ENCODE measurements at regions of chr9 and their contacts with region 1.

Region 1: DNA sequence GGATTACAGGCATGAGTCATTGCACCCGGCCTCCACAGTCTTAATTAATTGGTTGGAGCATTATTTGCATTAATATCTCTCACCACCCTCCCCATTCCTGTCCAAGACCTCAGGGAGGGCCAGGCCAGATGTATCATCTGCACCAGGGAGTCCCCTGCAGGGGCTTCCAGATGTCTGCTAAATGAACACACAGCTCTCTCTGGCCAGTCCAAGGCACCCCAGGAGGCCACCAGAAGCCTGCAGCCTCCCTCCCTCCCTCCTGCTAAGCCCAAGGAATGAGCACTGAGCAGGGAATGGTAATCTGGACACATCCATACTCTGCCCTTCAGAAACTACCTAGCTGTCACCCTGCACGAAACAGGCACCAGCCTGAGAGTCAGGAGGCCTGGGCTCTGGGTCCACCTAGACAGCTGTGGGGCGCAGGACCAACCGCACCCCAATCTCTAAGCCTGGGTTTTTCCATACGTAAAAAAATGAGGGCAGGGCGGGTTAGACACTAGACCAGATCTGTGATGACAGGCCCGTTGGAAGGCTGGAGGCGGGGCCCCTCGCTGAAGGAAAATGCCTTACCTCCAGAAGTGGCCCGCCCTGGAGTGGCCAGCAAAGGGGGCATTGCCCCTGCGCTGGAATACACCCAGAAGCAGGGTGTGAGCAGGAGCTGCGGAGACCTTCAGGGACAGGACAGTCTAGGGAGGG is 8.3 kb downstream of the CIZ1 start:
- DNase-seq: no peak
- ATAC-seq: no peak
- H3K4me3 ChIP-seq: no peak overlapping the region
- H3K27ac ChIP-seq: no peak overlapping the region
- H3K4me1 ChIP-seq: no peaks in the 10 kb centered on the region
- H3K27me3 ChIP-seq: no peaks in the 10 kb centered on the region
- CTCF ChIP-seq: no peak
- POLR2A ChIP-seq: no peak

Region 2: GRCh38 chr9:128322404-128323211 is 139.6 kb after region 1 on chr9 and contains the starts of genes COQ4 and TRUB2:
- intact Hi-C with region 1: loop called in 1 of 10 experiments (anchors 10 kb)
- DNase-seq: peak; percentile 94 to 95 (median 94)
- ATAC-seq: peak; percentile 98 to 99 (median 98)
- H3K4me3 ChIP-seq: peak within 1 kb of the TSS; percentile 62 to 98 (median 92)
- H3K27ac ChIP-seq: peak within 1 kb of the TSS; percentile 84 to 98 (median 94)
- H3K4me1 ChIP-seq: peaks cover 6 to 41% (median 29%) of the 10 kb centered on the region in 12 donors
- H3K27me3 ChIP-seq: no peaks in the 10 kb centered on the region
- CTCF ChIP-seq: no peak
- POLR2A ChIP-seq: peak in 1 of 2 donors; percentile 40
- total RNA-seq, gene COQ4: 19.0 to 43.2 (median 29.8) TPM
- total RNA-seq, gene TRUB2: 12.9 to 49.7 (median 34.5) TPM